ENCODE measurements at regions of chr7 and their contacts with region 1.

Region 1: GRCh38 chr7:119175911-119176627 is 951.6 kb downstream of the ANKRD7 start:
- DNase-seq: peak in 2 of 4 donors; percentile 51 to 75
- ATAC-seq: peak; percentile 73
- H3K4me3 ChIP-seq: no peak overlapping the region
- H3K27ac ChIP-seq: no peak overlapping the region
- H3K4me1 ChIP-seq: no peaks in the 10 kb centered on the region
- H3K27me3 ChIP-seq: no peaks in the 10 kb centered on the region
- CTCF ChIP-seq: peak; percentile 32 to 74

Region 2: GRCh38 chr7:118918556-118918955 is 257.5 kb before region 1 on chr7:
- intact Hi-C with region 1: loop called in 1 of 2 experiments (anchors 5 kb)
- DNase-seq: peak in 2 of 4 donors; percentile 5 to 33
- ATAC-seq: no peak
- H3K4me3 ChIP-seq: no peak overlapping the region
- H3K27ac ChIP-seq: no peak overlapping the region
- H3K4me1 ChIP-seq: no peaks in the 10 kb centered on the region
- H3K27me3 ChIP-seq: no peaks in the 10 kb centered on the region
- CTCF ChIP-seq: no peak

Measured in left lung (tissue), 14 donors.